ENCODE measurements at regions of chr10 and their contacts with region 1.

Region 1: DNA sequence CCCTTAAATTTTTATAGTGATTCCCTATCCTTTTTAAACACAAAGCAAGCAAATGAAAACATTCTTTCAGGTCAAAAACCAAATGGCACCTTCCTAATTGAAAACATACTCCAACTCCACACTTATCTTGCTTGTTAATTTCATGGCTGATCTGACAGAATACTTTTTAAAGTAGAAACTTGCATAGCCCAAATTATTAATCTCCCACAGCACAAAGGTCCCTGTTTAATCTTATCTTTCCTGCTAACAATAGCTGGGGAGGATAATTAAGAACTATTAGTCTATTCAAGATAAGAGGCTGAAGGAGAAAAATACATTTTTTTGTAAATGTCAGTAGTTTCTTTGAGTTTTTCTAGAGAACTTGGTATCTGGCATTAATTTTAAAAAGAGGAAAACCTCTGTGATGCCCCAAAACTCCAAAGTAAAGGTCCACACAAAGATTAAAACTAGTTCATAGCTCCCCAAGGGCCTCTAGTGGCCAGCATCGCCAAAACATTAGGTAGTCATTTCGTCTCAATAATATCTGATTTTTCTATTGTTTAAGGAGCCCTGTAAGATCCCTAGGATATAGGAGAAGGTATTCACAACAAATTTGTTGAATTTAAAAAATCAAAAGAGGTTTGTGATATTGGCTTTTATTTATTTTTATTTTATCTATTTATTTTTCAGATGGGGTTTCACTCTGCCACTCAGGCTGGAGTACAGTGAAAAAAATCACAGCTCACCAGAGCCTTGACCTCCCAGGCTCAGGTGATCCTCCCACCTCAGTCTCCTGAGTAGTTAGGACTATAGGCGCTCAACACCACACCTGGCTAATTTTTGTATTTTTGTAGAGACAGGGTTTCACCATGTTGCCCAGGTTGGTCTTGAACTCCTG is 14.7 kb downstream of the CDNF start:
- DNase-seq: peak in 1 of 2 experiments; percentile 37
- H3K4me3 ChIP-seq: no peak overlapping the region
- H3K27ac ChIP-seq: no peak overlapping the region
- H3K4me1 ChIP-seq: peaks cover 27% of the 10 kb centered on the region
- H3K27me3 ChIP-seq: no peaks in the 10 kb centered on the region
- CTCF ChIP-seq: peak; percentile 74

Region 2: DNA sequence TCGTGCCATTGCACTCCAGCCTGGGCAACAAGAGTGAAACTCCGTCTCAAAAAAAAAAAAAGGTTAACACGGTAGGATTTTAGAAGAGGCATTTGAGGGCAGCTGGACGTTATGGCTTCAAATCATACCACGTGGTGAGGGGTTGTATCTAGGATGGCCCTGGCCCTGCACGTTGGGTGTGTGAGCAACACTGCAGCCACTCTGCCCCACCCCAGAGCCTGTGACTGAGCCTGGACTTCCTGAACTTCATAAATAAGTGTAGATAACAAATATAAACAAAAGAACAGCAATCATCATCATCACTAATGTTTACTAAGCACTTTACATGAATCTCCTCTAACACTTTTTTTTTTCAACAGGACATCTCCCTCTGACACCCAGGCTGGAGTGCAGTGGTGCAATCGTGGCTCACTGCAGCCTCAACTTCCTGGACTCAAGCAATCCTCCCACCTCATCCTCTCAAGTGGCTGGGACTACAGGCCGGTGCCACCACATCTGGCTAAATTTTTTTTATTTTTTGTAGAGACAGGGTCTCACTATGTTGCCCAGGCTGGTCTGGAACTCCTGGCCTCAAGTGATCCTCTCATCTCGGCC is 322.8 kb before region 1 on chr10:
- CTCF ChIA-PET with region 1: no interaction called
- POLR2A ChIA-PET with region 1: no interaction called
- intact Hi-C with region 1: loop called (anchors 5 kb)
- DNase-seq: peak in 1 of 2 experiments; percentile 46
- H3K4me3 ChIP-seq: no peak overlapping the region
- H3K27ac ChIP-seq: no peak overlapping the region
- H3K4me1 ChIP-seq: no peaks in the 10 kb centered on the region
- H3K27me3 ChIP-seq: no peaks in the 10 kb centered on the region
- CTCF ChIP-seq: no peak

Region 3: GRCh38 chr10:14604181-14605142 is 218.7 kb before region 1 on chr10:
- CTCF ChIA-PET with region 1: no interaction called
- POLR2A ChIA-PET with region 1: interaction called, 5 read pairs
- intact Hi-C with region 1: loop called (anchors 1 kb)
- DNase-seq: peak in 1 of 2 experiments; percentile 81
- H3K4me3 ChIP-seq: peak overlapping the region; percentile 81
- H3K27ac ChIP-seq: peak overlapping the region; percentile 95
- H3K4me1 ChIP-seq: peaks cover 29% of the 10 kb centered on the region
- H3K27me3 ChIP-seq: no peaks in the 10 kb centered on the region
- CTCF ChIP-seq: no peak

Region 4: GRCh38 chr10:14617852-14618251 is 205.3 kb before region 1 on chr10:
- CTCF ChIA-PET with region 1: no interaction called
- POLR2A ChIA-PET with region 1: no interaction called
- intact Hi-C with region 1: no loop called
- DNase-seq: peak in 1 of 2 experiments; percentile 61
- H3K4me3 ChIP-seq: no peak overlapping the region
- H3K27ac ChIP-seq: peak overlapping the region; percentile 29
- H3K4me1 ChIP-seq: peaks cover 15% of the 10 kb centered on the region
- H3K27me3 ChIP-seq: no peaks in the 10 kb centered on the region
- CTCF ChIP-seq: no peak; the same call in 1 of the 2 replicates

Region 5: GRCh38 chr10:14712991-14713497 is 110.1 kb before region 1 on chr10:
- CTCF ChIA-PET with region 1: no interaction called
- POLR2A ChIA-PET with region 1: interaction called, 4 read pairs
- intact Hi-C with region 1: loop called (anchors 2 kb)
- DNase-seq: peak; percentile 54 to 90
- H3K4me3 ChIP-seq: no peak overlapping the region; the same call in 1 of the 2 replicates
- H3K27ac ChIP-seq: peak overlapping the region; percentile 76
- H3K4me1 ChIP-seq: peaks cover 20% of the 10 kb centered on the region
- H3K27me3 ChIP-seq: no peaks in the 10 kb centered on the region
- CTCF ChIP-seq: no peak

Region 6: GRCh38 chr10:14782691-14783363 is 40.3 kb before region 1 on chr10:
- CTCF ChIA-PET with region 1: no interaction called
- POLR2A ChIA-PET with region 1: no interaction called
- intact Hi-C with region 1: loop called (anchors 5 kb)
- DNase-seq: peak; percentile 77 to 93
- H3K4me3 ChIP-seq: no peak overlapping the region
- H3K27ac ChIP-seq: peak overlapping the region; percentile 89
- H3K4me1 ChIP-seq: peaks cover 36% of the 10 kb centered on the region
- H3K27me3 ChIP-seq: no peaks in the 10 kb centered on the region
- CTCF ChIP-seq: no peak

Measured in PC-9 (cell line).